Activated naive CD4-positive, alpha-beta T cell treated with anti-CD3 and anti-CD28 coated beads for 36 hours (primary cell): ENCODE measurements at regions of chr5 and their contacts with region 1.

Region 1: DNA sequence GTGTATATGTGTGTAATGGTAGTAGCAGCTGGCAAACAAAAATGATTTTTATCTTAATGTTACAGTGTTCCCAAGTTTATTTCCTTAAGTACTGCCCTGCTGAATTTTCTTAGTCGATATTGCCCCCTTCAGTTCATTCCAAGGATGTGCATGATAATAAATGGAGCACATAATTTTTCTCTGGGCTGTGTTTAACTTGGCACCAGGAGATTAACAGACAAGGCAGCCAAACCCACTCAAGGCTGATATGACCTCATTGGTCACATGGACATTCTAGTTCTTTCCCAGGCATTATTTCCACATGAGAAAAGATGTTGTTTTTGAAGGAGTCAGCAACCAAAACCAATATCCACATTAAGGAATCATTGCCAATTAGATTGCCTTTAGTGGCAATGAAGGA is 61.8 kb downstream of the COX7C start:
- DNase-seq: no peak
- H3K4me3 Mint-ChIP-seq: no peak overlapping the region
- H3K27ac Mint-ChIP-seq: no peak overlapping the region
- H3K4me1 Mint-ChIP-seq: no peaks in the 10 kb centered on the region
- H3K27me3 Mint-ChIP-seq: no peaks in the 10 kb centered on the region

Region 2: DNA sequence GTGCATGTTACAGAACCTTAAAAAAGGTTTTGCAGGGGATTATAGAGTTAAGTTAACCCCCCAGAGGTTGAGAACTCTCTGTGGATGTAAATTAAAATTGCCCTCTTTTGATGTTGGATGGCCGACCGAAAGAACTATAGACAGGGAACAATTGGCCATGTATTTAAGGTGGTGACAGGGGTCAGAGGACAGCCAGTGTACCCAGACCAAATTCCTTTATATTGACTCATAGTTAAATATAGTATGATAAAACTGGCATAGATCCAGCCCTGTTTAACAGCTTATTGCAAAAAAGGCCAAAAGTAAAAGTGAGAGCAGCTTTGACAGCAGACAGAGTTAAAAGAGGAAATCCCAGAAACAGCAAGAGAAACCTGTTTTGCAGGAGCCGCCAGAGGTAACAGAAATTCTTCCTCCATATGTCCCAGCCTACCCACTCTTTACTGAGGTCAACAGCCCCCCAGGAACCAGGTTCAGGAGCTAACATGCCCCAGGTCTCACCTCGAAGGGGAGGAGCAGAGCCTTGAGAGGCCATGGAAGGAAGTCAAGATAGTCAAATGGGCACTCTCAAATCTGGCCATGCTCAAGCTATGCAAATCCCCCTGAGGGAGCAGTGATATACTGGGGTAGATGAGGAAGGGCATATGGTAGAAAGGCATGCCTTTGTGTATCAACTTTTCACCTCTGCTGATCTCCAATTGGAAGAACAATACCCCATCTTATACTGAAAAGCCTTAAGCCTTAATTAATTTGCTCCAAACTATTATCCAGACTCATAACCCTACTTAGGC is 218.2 kb before region 1 on chr5:
- CTCF ChIA-PET with region 1: no interaction called
- intact Hi-C with region 1: loop called (anchors 5 kb)
- DNase-seq: no peak
- H3K4me3 Mint-ChIP-seq: no peak overlapping the region
- H3K27ac Mint-ChIP-seq: no peak overlapping the region
- H3K4me1 Mint-ChIP-seq: no peaks in the 10 kb centered on the region
- H3K27me3 Mint-ChIP-seq: no peaks in the 10 kb centered on the region

Region 3: GRCh38 chr5:86565197-86565789 is 114.2 kb before region 1 on chr5:
- CTCF ChIA-PET with region 1: interaction called, 8 read pairs
- intact Hi-C with region 1: loop called (anchors 2 kb)
- DNase-seq: no peak
- H3K4me3 Mint-ChIP-seq: no peak overlapping the region
- H3K27ac Mint-ChIP-seq: no peak overlapping the region
- H3K4me1 Mint-ChIP-seq: no peaks in the 10 kb centered on the region
- H3K27me3 Mint-ChIP-seq: peaks cover 9% of the 10 kb centered on the region